ENCODE measurements at regions of chr1 and their contacts with region 1.

Region 1: GRCh38 chr1:53572065-53572814 is 113.0 kb downstream of the DMRTB1 start:
- DNase-seq: peak; percentile 12
- ATAC-seq: peak; percentile 48
- H3K4me3 Mint-ChIP-seq: no peak overlapping the region
- H3K27ac Mint-ChIP-seq: no peak overlapping the region
- H3K4me1 Mint-ChIP-seq: peaks cover 18% of the 10 kb centered on the region
- H3K27me3 Mint-ChIP-seq: peaks cover under 1% of the 10 kb centered on the region
- CTCF ChIP-seq: no peak

Region 2: GRCh38 chr1:53585129-53585528 is 12.9 kb after region 1 on chr1:
- CTCF ChIA-PET with region 1: interaction called, 12 read pairs
- POLR2A ChIA-PET with region 1: no interaction called
- DNase-seq: no peak
- ATAC-seq: no peak
- H3K4me3 Mint-ChIP-seq: no peak overlapping the region
- H3K27ac Mint-ChIP-seq: no peak overlapping the region
- H3K4me1 Mint-ChIP-seq: peaks cover 19% of the 10 kb centered on the region
- H3K27me3 Mint-ChIP-seq: no peaks in the 10 kb centered on the region; the same call in 1 of the 2 replicates
- CTCF ChIP-seq: no peak

Region 3: DNA sequence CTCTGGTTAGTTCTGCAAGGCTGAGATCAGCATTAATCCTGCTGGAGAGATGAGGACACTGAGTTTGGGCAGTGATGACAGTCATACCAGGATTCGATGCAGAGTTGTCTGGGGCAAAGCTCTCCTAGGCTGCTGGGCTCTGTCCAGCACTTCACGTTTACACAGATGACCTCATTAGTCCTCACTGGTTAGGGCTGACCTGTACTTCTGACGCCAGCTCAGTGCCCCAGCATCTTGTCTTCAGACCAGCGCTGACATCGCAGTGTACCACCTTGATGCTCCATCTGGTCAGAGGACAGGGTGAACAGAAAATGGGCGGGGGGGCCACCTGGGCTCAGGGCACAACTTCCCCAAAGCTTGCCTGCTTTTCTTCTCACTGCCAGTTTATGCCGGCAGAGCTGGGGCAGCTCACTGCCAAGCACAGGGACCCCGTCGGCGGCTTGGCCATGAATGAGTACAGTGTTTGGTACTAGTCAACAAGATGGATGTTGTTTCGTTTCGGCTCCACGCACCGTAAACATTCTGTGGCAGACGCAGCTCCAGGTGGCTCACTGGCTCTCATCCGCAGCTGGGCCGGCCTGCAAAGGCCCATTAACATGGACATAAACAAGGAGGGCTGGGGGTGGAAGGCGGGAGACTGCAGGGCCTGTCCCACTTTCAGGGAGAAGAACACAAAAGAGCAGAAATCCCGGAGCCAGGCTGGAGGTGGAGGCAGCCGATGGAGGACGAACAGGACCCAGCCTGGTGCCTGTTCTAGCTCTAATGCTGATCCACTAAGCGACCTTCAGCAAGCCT is 48.0 kb after region 1 on chr1:
- CTCF ChIA-PET with region 1: no interaction called
- POLR2A ChIA-PET with region 1: no interaction called
- DNase-seq: no peak
- ATAC-seq: no peak
- H3K4me3 Mint-ChIP-seq: no peak overlapping the region
- H3K27ac Mint-ChIP-seq: no peak overlapping the region; the same call in 1 of the 2 replicates
- H3K4me1 Mint-ChIP-seq: no peaks in the 10 kb centered on the region
- H3K27me3 Mint-ChIP-seq: no peaks in the 10 kb centered on the region
- CTCF ChIP-seq: no peak